ENCODE measurements at regions of chr10 and their contacts with region 1.

Region 1: DNA sequence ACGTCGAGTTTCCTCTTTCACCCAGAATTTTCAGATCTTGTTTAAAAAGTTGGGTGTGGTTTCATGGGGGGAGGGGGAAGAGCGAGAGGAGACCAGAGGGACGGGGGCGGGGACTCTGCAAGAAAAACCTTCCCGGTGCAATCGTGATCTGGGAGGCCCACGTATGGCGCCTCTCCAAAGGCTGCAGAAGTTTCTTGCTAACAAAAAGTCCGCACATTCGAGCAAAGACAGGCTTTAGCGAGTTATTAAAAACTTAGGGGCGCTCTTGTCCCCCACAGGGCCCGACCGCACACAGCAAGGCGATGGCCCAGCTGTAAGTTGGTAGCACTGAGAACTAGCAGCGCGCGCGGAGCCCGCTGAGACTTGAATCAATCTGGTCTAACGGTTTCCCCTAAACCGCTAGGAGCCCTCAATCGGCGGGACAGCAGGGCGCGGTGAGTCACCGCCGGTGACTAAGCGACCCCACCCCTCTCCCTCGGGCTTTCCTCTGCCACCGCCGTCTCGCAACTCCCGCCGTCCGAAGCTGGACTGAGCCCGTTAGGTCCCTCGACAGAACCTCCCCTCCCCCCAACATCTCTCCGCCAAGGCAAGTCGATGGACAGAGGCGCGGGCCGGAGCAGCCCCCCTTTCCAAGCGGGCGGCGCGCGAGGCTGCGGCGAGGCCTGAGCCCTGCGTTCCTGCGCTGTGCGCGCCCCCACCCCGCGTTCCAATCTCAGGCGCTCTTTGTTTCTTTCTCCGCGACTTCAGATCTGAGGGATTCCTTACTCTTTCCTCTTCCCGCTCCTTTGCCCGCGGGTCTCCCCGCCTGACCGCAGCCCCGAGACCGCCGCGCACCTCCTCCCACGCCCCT is at the start of gene VIM:
- DNase-seq: peak; percentile 84
- H3K4me3 ChIP-seq: peak within 1 kb of the TSS; percentile 94
- H3K27ac ChIP-seq: peak within 1 kb of the TSS; percentile 98
- H3K27me3 ChIP-seq: no peaks in the 10 kb centered on the region
- CTCF ChIP-seq: peak; percentile 26
- polyA plus RNA-seq, gene VIM: 4,126 and 4,378 TPM in 2 replicates

Region 2: DNA sequence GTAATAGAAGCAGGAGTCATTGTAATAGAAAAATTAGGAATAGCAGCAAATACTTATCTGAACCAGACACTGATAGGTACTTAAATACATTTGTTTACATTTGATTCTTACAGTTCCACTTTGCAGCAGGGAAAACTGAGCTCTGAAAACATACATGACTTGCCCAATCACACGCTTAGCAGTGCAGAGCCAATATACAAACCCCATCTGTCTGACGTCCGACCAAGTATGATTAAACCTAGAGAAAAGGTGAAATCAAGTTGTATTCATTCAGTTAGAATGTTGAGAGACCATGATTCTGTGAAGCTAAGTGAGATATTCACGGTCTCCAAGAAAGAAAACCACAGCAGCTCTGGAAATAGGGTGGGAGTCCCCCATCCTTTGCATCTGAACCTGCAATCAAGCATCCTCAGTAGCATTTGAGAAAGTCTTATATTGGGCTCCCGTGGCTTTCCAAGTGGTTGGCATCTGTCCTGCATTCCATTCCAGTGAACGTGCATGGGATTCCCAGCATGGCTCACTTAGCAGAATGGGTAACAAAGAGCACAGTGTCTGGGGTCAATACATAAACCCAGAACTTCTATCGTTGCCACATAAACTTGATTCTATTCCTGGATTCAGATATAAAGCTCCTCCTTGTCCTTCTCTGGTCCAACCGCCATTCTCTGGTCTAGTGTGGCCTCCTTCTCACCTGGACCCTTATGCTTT is 262.4 kb before region 1 on chr10:
- CTCF ChIA-PET with region 1: interaction called, 4 read pairs
- POLR2A ChIA-PET with region 1: interaction called, 28 read pairs
- DNase-seq: peak; percentile 97
- H3K4me3 ChIP-seq: no peak overlapping the region
- H3K27ac ChIP-seq: peak overlapping the region; percentile 96
- H3K27me3 ChIP-seq: no peaks in the 10 kb centered on the region
- CTCF ChIP-seq: no peak

Region 3: DNA sequence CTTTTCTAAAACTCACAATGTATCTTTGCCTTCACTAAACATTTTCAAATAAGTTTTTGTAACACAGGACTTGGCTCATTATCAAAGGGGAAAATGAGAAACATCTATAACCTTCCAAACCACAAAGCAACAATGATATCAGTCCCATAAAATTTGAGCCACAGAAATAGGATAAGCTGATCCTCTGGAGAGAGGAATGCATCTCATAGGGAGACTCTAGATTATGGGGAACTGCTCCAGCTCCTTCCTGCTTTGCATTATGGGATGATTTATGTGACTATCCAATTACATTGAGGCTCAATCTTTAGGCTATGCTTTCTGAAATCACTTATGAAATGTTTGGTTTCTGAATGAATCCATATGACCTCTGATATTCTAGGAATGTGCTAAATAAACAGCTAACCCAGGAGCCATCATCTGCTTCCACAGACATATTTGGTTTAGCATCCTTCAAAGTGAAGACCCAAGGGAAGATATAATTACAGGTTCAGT is 169.1 kb before region 1 on chr10:
- CTCF ChIA-PET with region 1: interaction called, 3 read pairs
- POLR2A ChIA-PET with region 1: interaction called, 11 read pairs
- DNase-seq: peak; percentile 90
- H3K4me3 ChIP-seq: no peak overlapping the region
- H3K27ac ChIP-seq: no peak overlapping the region
- H3K27me3 ChIP-seq: no peaks in the 10 kb centered on the region
- CTCF ChIP-seq: no peak

Region 4: GRCh38 chr10:17206210-17206709 is 22.1 kb before region 1 on chr10:
- CTCF ChIA-PET with region 1: interaction called, 3 read pairs
- POLR2A ChIA-PET with region 1: interaction called, 54 read pairs
- DNase-seq: no peak
- H3K4me3 ChIP-seq: no peak overlapping the region
- H3K27ac ChIP-seq: no peak overlapping the region
- H3K27me3 ChIP-seq: no peaks in the 10 kb centered on the region
- CTCF ChIP-seq: no peak

Measured in AG04450 (cell line).